Activated CD4-positive, alpha-beta T cell treated with anti-CD3 and anti-CD28 coated beads, Interleukin-2, amount 10 ng/mL, durations not matched to agents 7 days and 5 days (primary cell): ENCODE measurements at regions of chr2 and their contacts with region 1.

Region 1: GRCh38 chr2:74178201-74179062 is at the start of gene MOB1A:
- DNase-seq: peak; percentile 99
- H3K4me3 Mint-ChIP-seq: peak within 1 kb of the TSS; percentile 92
- H3K27ac Mint-ChIP-seq: peak within 1 kb of the TSS; percentile 94
- H3K4me1 Mint-ChIP-seq: peaks cover 42% of the 10 kb centered on the region
- H3K27me3 Mint-ChIP-seq: no peaks in the 10 kb centered on the region
- total RNA-seq, gene MOB1A: 163 to 165 TPM

Region 2: DNA sequence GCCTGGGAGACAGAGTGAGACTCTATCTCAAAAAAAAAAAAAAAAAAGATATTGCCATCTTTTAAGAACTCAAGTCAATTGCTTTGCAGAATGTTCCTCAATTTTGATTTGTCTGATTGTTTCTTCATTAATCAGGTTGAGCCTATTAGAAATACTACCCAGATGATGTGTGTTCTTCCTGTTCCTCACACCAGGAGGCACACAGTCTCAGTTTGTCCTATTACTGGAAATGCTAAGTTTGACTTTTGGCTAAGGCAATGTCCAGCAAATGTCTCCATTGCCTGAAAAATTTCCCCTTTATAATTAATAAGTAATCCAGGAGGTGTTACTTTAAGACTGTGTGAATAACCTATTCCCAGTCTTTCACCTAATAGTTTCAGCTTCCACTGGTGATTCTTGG is 59.1 kb before region 1 on chr2:
- CTCF ChIA-PET with region 1: no interaction called
- POLR2A ChIA-PET with region 1: no interaction called
- DNase-seq: no peak
- H3K4me3 Mint-ChIP-seq: peak overlapping the region; percentile 85
- H3K27ac Mint-ChIP-seq: no peak overlapping the region
- H3K4me1 Mint-ChIP-seq: peaks cover 13% of the 10 kb centered on the region
- H3K27me3 Mint-ChIP-seq: peaks cover 4% of the 10 kb centered on the region

Region 3: GRCh38 chr2:74191596-74192380 is 13.4 kb after region 1 on chr2:
- CTCF ChIA-PET with region 1: interaction called, 83 read pairs
- POLR2A ChIA-PET with region 1: interaction called, 28 read pairs
- DNase-seq: no peak
- H3K4me3 Mint-ChIP-seq: no peak overlapping the region
- H3K27ac Mint-ChIP-seq: no peak overlapping the region
- H3K4me1 Mint-ChIP-seq: peaks cover 9% of the 10 kb centered on the region
- H3K27me3 Mint-ChIP-seq: peaks cover 8% of the 10 kb centered on the region

Region 4: GRCh38 chr2:74198461-74199274 is 20.2 kb after region 1 on chr2 and contains the start of gene MTHFD2:
- CTCF ChIA-PET with region 1: interaction called, 83 read pairs
- POLR2A ChIA-PET with region 1: interaction called, 28 read pairs
- DNase-seq: peak; percentile 92
- H3K4me3 Mint-ChIP-seq: peak within 1 kb of the TSS; percentile 92
- H3K27ac Mint-ChIP-seq: peak within 1 kb of the TSS; percentile 98
- H3K4me1 Mint-ChIP-seq: peaks cover 55% of the 10 kb centered on the region
- H3K27me3 Mint-ChIP-seq: no peaks in the 10 kb centered on the region
- total RNA-seq, gene MTHFD2: 129 to 130 TPM

Region 5: GRCh38 chr2:74206180-74206688 is 27.8 kb after region 1 on chr2:
- CTCF ChIA-PET with region 1: interaction called, 83 read pairs
- POLR2A ChIA-PET with region 1: interaction called, 3 read pairs
- DNase-seq: peak; percentile 50
- H3K4me3 Mint-ChIP-seq: peak overlapping the region; percentile 64
- H3K27ac Mint-ChIP-seq: peak overlapping the region; percentile 94
- H3K4me1 Mint-ChIP-seq: peaks cover 73% of the 10 kb centered on the region
- H3K27me3 Mint-ChIP-seq: no peaks in the 10 kb centered on the region